ENCODE measurements at regions of chr4 and their contacts with region 1.

Region 1: DNA sequence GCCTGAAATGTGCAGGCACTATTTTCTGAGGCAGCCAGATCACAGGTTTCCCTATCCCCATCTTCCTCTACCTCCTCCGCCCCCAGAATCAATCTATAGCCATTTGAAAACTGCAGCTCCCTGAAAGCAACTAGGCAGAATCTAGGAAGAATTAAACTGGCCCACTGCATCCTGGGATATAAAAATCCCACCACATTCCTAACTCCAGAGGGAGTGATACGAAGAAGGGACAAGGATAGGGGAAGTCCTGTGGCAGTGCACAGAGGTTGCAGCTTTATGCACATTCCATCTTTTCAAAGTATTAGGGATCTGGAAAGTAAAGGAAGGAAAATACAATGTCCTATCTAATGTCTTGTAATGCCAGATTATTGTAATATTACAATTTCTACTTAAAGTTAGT is 18.3 kb upstream of the HERC3 start:
- DNase-seq: no peak
- ATAC-seq: no peak
- H3K4me3 ChIP-seq: no peak overlapping the region
- H3K27ac ChIP-seq: no peak overlapping the region
- H3K4me1 ChIP-seq: peaks cover 9 to 18% of the 10 kb centered on the region in 2 donors
- H3K27me3 ChIP-seq: no peaks in the 10 kb centered on the region
- CTCF ChIP-seq: no peak
- POLR2A ChIP-seq: no peak

Region 2: DNA sequence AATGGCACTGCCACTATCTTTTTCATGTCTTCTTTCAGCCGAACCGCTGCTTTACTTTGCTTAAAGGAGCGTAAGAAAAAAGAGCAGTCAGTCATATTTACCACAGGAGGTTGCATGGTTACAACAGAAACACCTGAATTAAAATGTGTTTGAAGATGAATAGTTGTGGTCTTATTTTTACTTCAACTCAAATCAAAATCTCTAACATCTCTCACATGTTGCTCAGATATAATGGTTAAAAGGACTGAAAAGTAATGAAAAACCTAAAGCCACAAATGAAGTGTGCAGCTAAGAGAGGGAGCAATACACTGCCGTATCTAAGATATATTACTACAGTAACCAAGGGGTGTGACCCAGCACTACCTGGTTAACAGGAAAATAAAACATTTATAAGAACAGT is 455.6 kb after region 1 on chr4:
- in situ Hi-C with region 1: loop called in 1 of 4 experiments (anchors 25 kb)
- intact Hi-C with region 1: no loop called
- DNase-seq: no peak
- ATAC-seq: no peak
- H3K4me3 ChIP-seq: no peak overlapping the region
- H3K27ac ChIP-seq: no peak overlapping the region
- H3K4me1 ChIP-seq: peaks cover 0 to 5% of the 10 kb centered on the region in 2 donors
- H3K27me3 ChIP-seq: no peaks in the 10 kb centered on the region
- CTCF ChIP-seq: no peak
- POLR2A ChIP-seq: no peak